ENCODE measurements at regions of chr6 and their contacts with region 1.

Region 1: GRCh38 chr6:110873981-110874879 is at the start of gene AMD1:
- DNase-seq: peak; percentile 97
- ATAC-seq: peak; percentile 79
- H3K4me3 Mint-ChIP-seq: peak within 1 kb of the TSS; percentile 93
- H3K27ac Mint-ChIP-seq: peak within 1 kb of the TSS; percentile 98
- H3K4me1 Mint-ChIP-seq: peaks cover 25% of the 10 kb centered on the region
- H3K27me3 Mint-ChIP-seq: no peaks in the 10 kb centered on the region
- total RNA-seq, gene AMD1: 90.5 to 127 TPM

Region 2: DNA sequence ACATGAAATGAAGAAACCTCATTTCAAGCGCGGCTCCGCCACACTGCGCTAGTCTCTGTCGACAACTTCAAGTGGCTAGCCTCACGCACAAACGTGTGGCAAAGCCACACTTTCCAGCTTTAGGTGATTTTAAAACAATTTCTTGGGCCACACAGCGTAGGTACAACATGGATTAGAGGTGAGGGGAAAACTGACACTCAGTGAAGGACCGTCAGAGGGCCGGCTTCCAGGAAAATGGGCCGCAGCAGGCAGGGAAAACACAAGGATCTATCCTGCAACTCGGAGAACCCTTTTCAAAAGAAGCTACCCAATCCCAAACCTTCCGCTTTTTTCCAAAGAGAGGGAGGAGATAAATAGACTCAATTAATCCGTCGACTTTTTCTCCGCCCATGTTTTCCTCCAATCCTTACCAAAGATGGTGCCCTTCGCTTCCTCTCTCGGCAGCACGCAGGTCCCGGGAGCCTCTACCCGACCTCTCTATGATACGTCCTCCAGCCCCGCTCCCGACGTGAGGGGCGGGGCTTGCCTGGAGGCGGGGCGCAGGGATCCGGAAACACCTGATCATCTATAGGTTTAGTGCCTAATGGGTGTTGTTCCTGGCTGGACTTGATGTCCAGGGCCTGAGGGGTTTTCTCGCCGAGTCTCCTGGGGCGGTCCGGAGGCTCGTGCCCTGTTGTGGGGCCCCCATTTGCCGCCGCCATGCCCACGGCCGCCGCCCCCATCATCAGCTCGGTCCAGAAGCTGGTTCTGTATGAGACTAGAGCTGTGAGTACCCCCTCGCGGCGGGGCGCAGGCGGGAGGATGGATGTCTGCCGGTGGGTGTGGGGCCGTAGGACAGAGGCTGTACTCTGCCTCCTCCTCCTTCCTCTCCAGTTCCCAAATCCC is 1183.3 kb before region 1 on chr6 and contains the starts of genes AK9 and FIG4:
- CTCF ChIA-PET with region 1: no interaction called
- POLR2A ChIA-PET with region 1: no interaction called
- intact Hi-C with region 1: loop called in 1 of 2 experiments (anchors 10 kb)
- DNase-seq: peak; percentile 95
- ATAC-seq: peak; percentile 94
- H3K4me3 Mint-ChIP-seq: peak within 1 kb of the TSS; percentile 94
- H3K27ac Mint-ChIP-seq: peak within 1 kb of the TSS; percentile 92
- H3K4me1 Mint-ChIP-seq: peaks cover 38% of the 10 kb centered on the region
- H3K27me3 Mint-ChIP-seq: no peaks in the 10 kb centered on the region
- total RNA-seq, gene AK9: 3.5 to 5.2 TPM
- total RNA-seq, gene FIG4: 14.4 to 17.5 TPM

Region 3: GRCh38 chr6:110528101-110528929 is 345.9 kb before region 1 on chr6:
- CTCF ChIA-PET with region 1: interaction called, 17 read pairs
- POLR2A ChIA-PET with region 1: interaction called, 6 read pairs
- intact Hi-C with region 1: loop called (anchors 2 kb)
- DNase-seq: peak; percentile 69
- ATAC-seq: peak; percentile 77
- H3K4me3 Mint-ChIP-seq: no peak overlapping the region
- H3K27ac Mint-ChIP-seq: no peak overlapping the region
- H3K4me1 Mint-ChIP-seq: peaks cover 9% of the 10 kb centered on the region
- H3K27me3 Mint-ChIP-seq: peaks cover 4% of the 10 kb centered on the region

Region 4: DNA sequence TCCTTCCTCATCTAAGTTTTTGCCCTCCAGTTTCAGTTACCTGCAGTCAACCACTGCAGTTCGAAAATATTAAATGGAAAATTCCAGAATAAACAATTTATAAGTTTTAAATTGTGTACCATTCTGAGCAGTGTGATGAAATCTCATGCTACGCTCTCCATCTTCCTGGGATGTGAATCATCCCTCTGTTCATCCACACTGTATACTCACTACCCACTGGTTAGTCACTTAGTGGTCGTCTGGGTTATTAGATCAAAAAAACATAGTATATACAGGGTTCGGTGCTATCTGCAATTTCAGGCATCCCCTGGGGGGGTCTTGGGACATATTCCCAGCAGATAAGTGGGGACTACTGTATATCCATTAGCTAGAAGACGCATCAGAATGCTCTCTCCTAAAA is 245.9 kb before region 1 on chr6:
- CTCF ChIA-PET with region 1: no interaction called
- POLR2A ChIA-PET with region 1: no interaction called
- intact Hi-C with region 1: no loop called
- DNase-seq: no peak
- ATAC-seq: no peak
- H3K4me3 Mint-ChIP-seq: no peak overlapping the region
- H3K27ac Mint-ChIP-seq: no peak overlapping the region
- H3K4me1 Mint-ChIP-seq: no peaks in the 10 kb centered on the region
- H3K27me3 Mint-ChIP-seq: no peaks in the 10 kb centered on the region

Region 5: DNA sequence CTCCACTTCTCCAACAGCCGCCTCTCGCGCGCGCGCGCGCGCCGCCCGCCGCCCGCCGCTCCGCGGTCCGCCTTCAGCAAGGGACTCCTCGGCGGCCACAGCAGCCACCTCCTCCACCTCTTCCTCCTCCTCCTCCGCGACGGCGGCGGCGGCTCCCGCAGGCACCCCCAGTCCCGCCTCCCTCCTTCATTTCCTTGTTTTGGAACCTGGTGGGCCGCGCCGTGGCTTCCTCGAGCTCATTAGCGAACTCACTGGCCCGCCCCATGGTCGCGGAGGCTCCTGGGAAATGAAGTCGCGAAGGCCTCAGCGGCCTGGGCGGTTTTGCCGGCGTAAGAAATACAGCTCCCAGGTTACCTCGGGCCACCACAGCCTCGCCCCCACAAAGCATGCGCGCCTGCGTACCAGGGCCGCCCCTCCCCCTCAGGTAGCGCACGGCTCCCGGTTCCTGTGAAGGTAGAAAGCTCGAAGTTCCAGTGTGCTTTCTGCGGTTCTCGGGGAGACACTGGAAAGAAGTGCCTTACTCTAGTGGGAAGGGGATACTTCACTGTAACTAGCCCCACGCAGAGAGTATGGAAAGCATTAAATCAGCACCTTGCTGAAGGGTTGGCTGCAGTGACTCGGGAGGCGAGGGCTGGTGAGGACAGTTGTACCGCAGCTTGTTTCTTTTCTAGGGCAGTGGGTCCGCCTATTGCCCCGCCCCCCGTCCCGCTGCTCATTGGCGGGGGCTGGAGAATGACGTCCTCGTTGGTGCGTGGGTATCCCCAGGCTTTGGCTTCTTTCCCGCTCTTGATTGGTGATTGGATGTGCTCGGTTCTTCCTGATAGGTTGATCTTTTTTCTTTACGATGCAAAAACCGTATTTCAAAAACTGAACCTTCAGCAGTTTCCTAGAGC is 58.8 kb before region 1 on chr6 and contains the start of gene CDK19:
- CTCF ChIA-PET with region 1: interaction called, 14 read pairs
- POLR2A ChIA-PET with region 1: interaction called, 231 read pairs
- intact Hi-C with region 1: loop called (anchors 1 kb)
- DNase-seq: peak; percentile 99
- ATAC-seq: peak; percentile 85
- H3K4me3 Mint-ChIP-seq: peak within 1 kb of the TSS; percentile 88
- H3K27ac Mint-ChIP-seq: peak within 1 kb of the TSS; percentile 98
- H3K4me1 Mint-ChIP-seq: peaks cover 32% of the 10 kb centered on the region
- H3K27me3 Mint-ChIP-seq: no peaks in the 10 kb centered on the region
- total RNA-seq, gene CDK19: 14.7 to 15.7 TPM

Region 6: DNA sequence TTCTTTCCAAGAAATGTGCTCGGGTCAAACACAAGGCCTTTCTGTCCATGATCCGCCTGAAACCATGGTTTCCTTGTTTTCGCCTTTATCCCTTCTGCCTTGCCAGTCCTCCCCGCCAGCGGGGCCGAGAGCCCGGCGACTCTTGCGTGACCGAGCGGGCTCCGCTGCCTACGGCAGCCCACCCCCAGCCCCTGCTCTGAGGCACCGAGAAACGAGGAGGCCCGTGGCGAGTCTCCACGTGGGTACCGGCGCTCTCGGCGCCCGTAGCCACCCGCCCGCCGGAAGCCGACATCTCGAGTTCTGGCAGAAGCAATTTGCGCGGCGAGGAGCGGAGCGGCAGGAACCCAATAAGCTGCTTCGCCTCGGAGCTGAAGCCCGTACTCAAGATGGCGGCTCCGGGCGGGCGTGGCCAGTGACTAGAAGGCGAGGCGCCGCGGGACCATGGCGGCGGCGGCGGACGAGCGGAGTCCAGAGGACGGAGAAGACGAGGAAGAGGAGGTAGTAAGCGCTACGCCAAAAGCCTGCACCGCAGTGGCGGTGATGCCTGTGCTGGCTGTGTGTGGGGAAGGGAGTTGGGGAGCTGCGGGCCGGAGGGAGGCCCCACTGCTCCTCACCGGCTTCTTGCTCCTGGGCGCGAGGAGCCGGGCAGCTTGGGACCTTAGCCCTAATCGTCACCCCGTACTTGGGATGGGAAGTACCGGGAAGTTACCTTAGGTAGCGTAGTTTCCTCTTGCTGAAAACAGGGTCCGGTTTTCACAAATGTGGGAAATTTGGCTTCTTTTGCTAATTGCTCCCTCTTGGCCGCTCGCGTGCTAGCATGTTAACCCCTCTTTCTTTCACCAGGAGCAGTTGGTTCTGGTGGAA is 84.3 kb after region 1 on chr6 and contains the start of gene GTF3C6:
- CTCF ChIA-PET with region 1: interaction called, 6 read pairs
- POLR2A ChIA-PET with region 1: interaction called, 19 read pairs
- intact Hi-C with region 1: loop called (anchors 1 to 2 kb)
- DNase-seq: peak; percentile 97
- ATAC-seq: peak; percentile 100
- H3K4me3 Mint-ChIP-seq: peak within 1 kb of the TSS; percentile 90
- H3K27ac Mint-ChIP-seq: peak within 1 kb of the TSS; percentile 97
- H3K4me1 Mint-ChIP-seq: peaks cover 14% of the 10 kb centered on the region
- H3K27me3 Mint-ChIP-seq: peaks cover 1% of the 10 kb centered on the region
- total RNA-seq, gene GTF3C6: 93.0 to 106 TPM

Region 7: GRCh38 chr6:110999634-111000270 is 125.5 kb after region 1 on chr6:
- CTCF ChIA-PET with region 1: no interaction called
- POLR2A ChIA-PET with region 1: interaction called, 10 read pairs
- intact Hi-C with region 1: no loop called
- DNase-seq: no peak
- ATAC-seq: no peak
- H3K4me3 Mint-ChIP-seq: no peak overlapping the region
- H3K27ac Mint-ChIP-seq: no peak overlapping the region
- H3K4me1 Mint-ChIP-seq: peaks cover 4% of the 10 kb centered on the region
- H3K27me3 Mint-ChIP-seq: no peaks in the 10 kb centered on the region

Region 8: DNA sequence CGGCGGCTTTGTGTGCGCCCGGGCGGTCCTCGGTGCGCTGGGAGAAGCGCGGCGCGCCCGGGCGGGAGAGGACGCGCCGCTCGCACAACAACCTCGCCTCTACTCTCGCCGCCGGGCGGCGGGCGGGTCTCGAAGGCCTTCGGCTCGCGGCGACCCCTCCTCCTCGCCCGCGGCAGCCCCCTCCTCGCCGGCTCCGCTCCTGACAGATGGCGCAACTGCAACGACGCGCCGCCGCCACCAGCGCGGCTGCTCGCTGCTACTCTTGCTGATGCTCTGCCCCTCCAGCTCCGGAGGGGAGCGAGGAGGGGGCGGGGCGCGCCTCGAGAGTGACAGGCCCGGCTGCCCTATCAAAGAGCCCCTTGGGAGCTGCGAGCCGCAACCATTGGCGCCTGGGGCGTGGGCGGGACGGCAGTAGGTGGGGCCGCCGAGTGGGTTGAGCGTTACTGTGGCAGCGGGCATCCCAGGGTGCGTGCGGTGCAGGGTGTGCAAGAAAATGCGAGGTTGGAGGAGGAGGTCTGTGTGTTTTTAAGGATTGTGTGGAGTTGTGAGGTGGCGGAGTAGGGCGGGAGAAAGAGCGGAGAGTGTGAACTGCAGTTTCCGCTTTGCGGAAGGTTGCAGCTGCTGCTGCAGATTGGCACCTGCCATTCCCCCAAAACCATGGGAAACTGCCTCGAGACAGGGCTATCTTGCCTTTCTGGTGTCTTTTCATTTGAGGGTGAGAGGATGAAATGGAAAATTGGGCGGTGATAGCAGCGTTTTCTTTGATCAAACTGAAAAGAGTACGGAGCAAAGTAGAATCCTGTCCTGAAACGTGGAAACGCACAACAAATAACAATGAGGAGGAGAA is 999.2 kb after region 1 on chr6 and contains the start of gene FYN:
- CTCF ChIA-PET with region 1: no interaction called
- POLR2A ChIA-PET with region 1: no interaction called
- intact Hi-C with region 1: loop called in 1 of 2 experiments (anchors 10 kb)
- DNase-seq: peak; percentile 100
- ATAC-seq: peak; percentile 87
- H3K4me3 Mint-ChIP-seq: peak within 1 kb of the TSS; percentile 98
- H3K27ac Mint-ChIP-seq: peak within 1 kb of the TSS; percentile 91
- H3K4me1 Mint-ChIP-seq: peaks cover 35% of the 10 kb centered on the region
- H3K27me3 Mint-ChIP-seq: no peaks in the 10 kb centered on the region
- total RNA-seq, gene FYN: 345 to 504 TPM

Measured in activated CD4-positive, alpha-beta T cell treated with anti-CD3 and anti-CD28 coated beads for 36 hours (primary cell).